Endothelial cell of umbilical vein (primary cell): ENCODE measurements at regions of chr1 and their contacts with region 1.

Region 1: GRCh38 chr1:175319418-175320230 is 127.0 kb upstream of the KIAA0040 start:
- DNase-seq: peak; percentile 75
- H3K4me3 ChIP-seq: no peak overlapping the region
- H3K27ac ChIP-seq: no peak overlapping the region
- H3K4me1 ChIP-seq: peaks cover 12% of the 10 kb centered on the region
- H3K27me3 ChIP-seq: peaks cover 2 to 3% of the 10 kb centered on the region in 2 experiments
- CTCF ChIP-seq: peak; percentile 85 to 88
- POLR2A ChIP-seq: no peak

Region 2: DNA sequence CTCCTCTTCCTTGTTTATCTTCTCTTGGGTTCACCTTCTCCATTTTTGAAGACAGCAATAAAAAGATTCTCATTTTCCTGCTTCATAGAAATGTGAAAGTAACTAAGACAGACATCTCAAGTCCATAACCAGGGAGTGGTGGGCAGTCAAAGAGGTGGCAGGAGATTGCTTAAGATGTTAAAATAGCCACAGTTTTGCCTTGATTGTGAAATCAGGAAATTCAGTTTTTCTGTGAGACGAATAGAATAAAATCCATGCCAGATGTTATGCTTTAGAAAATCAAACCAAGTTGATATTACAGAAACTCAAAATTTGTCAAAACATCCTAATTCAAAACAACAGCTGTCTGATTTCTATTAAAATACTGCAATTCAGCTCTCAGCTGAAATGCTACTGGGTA is 194.8 kb before region 1 on chr1:
- CTCF ChIA-PET with region 1: interaction called, 12 read pairs
- POLR2A ChIA-PET with region 1: no interaction called
- dilution Hi-C with region 1: no loop called
- intact Hi-C with region 1: no loop called
- DNase-seq: no peak
- H3K4me3 ChIP-seq: no peak overlapping the region
- H3K27ac ChIP-seq: no peak overlapping the region
- H3K4me1 ChIP-seq: no peaks in the 10 kb centered on the region
- H3K27me3 ChIP-seq: peaks cover 0 to 2% of the 10 kb centered on the region in 2 experiments
- CTCF ChIP-seq: no peak
- POLR2A ChIP-seq: no peak

Region 3: DNA sequence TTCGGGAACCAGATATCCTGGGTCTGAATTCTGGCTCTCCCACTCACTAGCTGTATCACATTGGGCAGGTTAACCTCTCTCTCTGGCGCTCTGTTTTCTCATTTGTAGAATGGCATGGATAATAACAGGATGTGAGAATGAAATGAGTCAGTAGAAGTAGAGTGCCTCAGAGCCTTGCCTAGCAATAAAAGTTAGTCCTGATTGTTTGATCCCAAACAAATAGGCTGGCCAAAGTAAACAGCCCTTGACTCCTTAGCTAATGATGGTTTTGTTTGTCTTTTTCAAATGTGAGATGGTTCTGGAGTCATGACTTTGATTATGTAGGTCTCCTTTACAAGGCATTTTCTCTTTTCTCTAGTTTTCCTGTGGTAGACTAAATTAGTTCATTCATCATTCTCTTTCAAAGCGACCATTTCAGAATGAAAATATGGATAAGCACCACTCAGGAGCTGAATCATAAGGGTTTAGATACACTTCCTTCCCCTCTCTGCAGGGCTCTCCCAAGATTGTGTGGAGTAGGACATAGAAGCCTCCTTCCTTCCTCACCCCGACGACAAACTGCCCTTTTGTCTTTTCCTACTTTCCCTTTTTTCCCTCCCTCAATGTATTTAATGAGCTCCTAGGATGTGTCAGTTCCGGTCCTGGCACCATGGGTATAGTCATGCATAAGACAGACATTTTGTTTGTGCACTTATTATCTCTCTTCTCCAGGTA is 150.2 kb before region 1 on chr1:
- CTCF ChIA-PET with region 1: interaction called, 16 read pairs
- POLR2A ChIA-PET with region 1: interaction called, 3 read pairs
- dilution Hi-C with region 1: no loop called
- intact Hi-C with region 1: loop called (anchors 1 kb)
- DNase-seq: peak; percentile 94
- H3K4me3 ChIP-seq: peak overlapping the region in 1 of 3 experiments; percentile 40
- H3K27ac ChIP-seq: peak overlapping the region; percentile 99
- H3K4me1 ChIP-seq: peaks cover 32% of the 10 kb centered on the region
- H3K27me3 ChIP-seq: no peaks in the 10 kb centered on the region
- CTCF ChIP-seq: no peak
- POLR2A ChIP-seq: peak; percentile 56

Region 4: GRCh38 chr1:175200678-175201521 is 118.7 kb before region 1 on chr1:
- CTCF ChIA-PET with region 1: interaction called, 4 read pairs
- POLR2A ChIA-PET with region 1: no interaction called
- dilution Hi-C with region 1: no loop called
- intact Hi-C with region 1: loop called (anchors 1 kb)
- DNase-seq: peak; percentile 91
- H3K4me3 ChIP-seq: no peak overlapping the region
- H3K27ac ChIP-seq: peak overlapping the region; percentile 85
- H3K4me1 ChIP-seq: peaks cover 42% of the 10 kb centered on the region
- H3K27me3 ChIP-seq: no peaks in the 10 kb centered on the region
- CTCF ChIP-seq: no peak
- POLR2A ChIP-seq: no peak

Region 5: GRCh38 chr1:175250027-175250426 is 69.6 kb before region 1 on chr1:
- CTCF ChIA-PET with region 1: no interaction called
- POLR2A ChIA-PET with region 1: no interaction called
- dilution Hi-C with region 1: no loop called
- intact Hi-C with region 1: no loop called
- DNase-seq: no peak
- H3K4me3 ChIP-seq: no peak overlapping the region
- H3K27ac ChIP-seq: no peak overlapping the region
- H3K4me1 ChIP-seq: no peaks in the 10 kb centered on the region
- H3K27me3 ChIP-seq: peaks cover 0 to 4% of the 10 kb centered on the region in 2 experiments
- CTCF ChIP-seq: no peak
- POLR2A ChIP-seq: no peak

Region 6: DNA sequence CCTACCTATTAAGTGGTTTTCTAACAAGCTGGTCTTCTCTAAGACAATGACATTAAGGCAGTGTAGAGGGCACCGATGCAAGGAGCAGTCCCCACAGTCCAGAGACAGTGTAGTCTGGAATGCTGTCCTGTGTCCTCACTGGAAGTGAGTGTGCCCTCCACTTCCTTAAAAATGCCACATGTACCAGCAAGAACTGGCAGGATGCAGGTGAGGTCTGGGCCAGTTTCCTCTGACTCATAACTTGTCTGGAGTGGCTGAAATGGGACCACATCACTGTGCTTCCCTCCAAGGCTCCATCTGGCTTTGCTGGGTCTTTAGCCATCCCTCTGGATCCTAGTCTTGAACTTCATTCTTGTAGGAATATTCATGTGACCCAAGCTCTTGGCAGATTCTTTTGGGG is 43.4 kb after region 1 on chr1:
- CTCF ChIA-PET with region 1: interaction called, 3 read pairs
- POLR2A ChIA-PET with region 1: no interaction called
- dilution Hi-C with region 1: no loop called
- intact Hi-C with region 1: loop called (anchors 2 kb)
- DNase-seq: peak; percentile 43
- H3K4me3 ChIP-seq: no peak overlapping the region
- H3K27ac ChIP-seq: peak overlapping the region; percentile 9
- H3K4me1 ChIP-seq: peaks cover 14% of the 10 kb centered on the region
- H3K27me3 ChIP-seq: peaks cover 3 to 16% of the 10 kb centered on the region in 2 experiments
- CTCF ChIP-seq: no peak
- POLR2A ChIP-seq: no peak